Heart left ventricle (tissue), 16 donors: ENCODE measurements at regions of chr17 and their contacts with region 1.

Region 1: DNA sequence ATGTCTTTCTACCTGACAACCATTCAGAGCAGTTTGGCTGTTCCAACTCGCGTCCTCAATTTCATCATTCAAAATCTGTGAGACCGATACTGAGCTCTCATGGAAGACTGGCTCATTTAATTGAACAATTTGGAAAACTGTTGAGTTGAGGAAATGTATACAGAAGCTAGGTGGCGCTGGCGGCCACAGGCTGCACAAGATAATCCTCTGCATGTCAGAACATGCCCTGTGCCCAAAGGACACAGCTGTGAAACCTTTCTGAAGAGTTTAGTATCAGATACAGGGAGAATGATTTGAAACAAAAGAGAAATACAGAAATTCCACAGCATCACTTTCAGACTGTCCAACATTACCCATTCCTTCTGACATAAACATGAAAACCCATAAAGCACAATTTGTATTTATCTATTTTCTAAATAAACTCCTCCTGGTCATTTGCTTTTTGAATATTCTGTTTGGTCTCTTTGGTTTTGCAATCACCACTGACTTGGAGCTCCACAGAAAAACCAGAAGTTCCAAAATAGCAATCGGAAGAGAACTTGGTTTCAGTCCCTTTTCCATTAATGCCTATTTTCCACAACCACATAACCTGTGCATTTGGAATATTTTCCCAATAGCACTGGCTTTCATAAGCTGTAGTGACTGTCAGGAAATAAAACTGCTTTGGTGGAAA is 192.8 kb downstream of the MAP2K6 start:
- DNase-seq: peak; percentile 62 to 87 (median 76)
- ATAC-seq: peak; percentile 68 to 92 (median 86)
- H3K4me3 ChIP-seq: no peak overlapping the region
- H3K27ac ChIP-seq: peak overlapping the region; percentile 1 to 81 (median 62)
- H3K4me1 ChIP-seq: peaks cover 5 to 39% (median 33%) of the 10 kb centered on the region in 12 donors
- H3K27me3 ChIP-seq: no peaks in the 10 kb centered on the region
- CTCF ChIP-seq: peak; percentile 79 to 95 (median 89)
- POLR2A ChIP-seq: no peak

Region 2: DNA sequence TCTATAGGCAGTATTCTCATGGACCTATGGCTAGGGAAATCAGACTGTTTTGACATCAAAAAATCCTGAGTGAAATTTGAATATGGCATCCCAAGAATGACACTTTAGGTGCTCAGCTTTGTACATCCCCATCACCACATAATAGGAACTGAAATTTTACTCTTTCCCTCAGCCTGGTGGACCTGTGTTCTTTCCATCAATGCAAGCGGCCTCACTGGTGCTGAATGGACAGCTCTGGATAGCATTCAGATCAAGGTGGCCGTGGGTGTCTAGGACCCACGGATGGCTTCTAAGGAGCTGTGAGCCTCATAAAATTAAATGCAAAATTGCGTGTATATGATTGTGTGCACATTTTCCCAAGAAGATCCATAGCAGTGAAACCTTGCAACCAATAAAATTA is 40.2 kb before region 1 on chr17:
- intact Hi-C with region 1: loop called in 3 of 10 experiments (anchors 5 kb)
- DNase-seq: no peak
- ATAC-seq: no peak
- H3K4me3 ChIP-seq: no peak overlapping the region
- H3K27ac ChIP-seq: no peak overlapping the region
- H3K4me1 ChIP-seq: peaks cover 0 to 3% (median 0%) of the 10 kb centered on the region in 12 donors
- H3K27me3 ChIP-seq: no peaks in the 10 kb centered on the region
- CTCF ChIP-seq: no peak
- POLR2A ChIP-seq: no peak

Region 3: DNA sequence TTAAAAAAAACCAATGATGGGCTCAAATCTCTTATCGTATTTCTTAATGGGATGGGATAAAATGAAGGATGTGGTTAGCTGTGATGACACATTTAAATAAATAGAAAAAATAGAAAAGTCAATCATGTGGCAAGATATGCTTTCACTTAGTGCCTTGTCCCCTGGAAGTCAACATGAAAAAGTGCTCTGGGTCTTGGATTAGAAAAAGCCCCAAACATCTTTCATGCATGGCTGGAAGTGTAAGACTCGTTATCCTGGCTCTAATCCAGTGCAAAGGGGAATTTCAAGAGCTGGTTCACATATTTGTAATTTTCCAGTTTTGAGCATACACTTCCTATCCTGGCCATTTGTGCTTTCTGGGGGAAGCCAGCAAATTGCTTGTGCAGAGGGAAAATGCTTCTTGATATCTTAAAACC is 31.9 kb before region 1 on chr17:
- intact Hi-C with region 1: loop called in 1 of 10 experiments (anchors 5 kb)
- DNase-seq: no peak
- ATAC-seq: peak in 2 of 4 donors; percentile 55 to 63
- H3K4me3 ChIP-seq: no peak overlapping the region
- H3K27ac ChIP-seq: peak overlapping the region in 10 of 12 donors; percentile 3 to 58 (median 27)
- H3K4me1 ChIP-seq: peaks cover 3 to 31% (median 19%) of the 10 kb centered on the region in 12 donors
- H3K27me3 ChIP-seq: no peaks in the 10 kb centered on the region
- CTCF ChIP-seq: no peak
- POLR2A ChIP-seq: no peak

Region 4: GRCh38 chr17:70137451-70138230 is 530.3 kb after region 1 on chr17:
- intact Hi-C with region 1: loop called in 5 of 10 experiments (anchors 2 to 5 kb)
- DNase-seq: peak in 4 of 5 donors; percentile 32 to 53 (median 34)
- ATAC-seq: peak; percentile 95 to 99 (median 98)
- H3K4me3 ChIP-seq: peak overlapping the region in 11 of 12 donors; percentile 14 to 58 (median 42)
- H3K27ac ChIP-seq: peak overlapping the region; percentile 55 to 86 (median 82)
- H3K4me1 ChIP-seq: peaks cover 0 to 22% (median 15%) of the 10 kb centered on the region in 12 donors
- H3K27me3 ChIP-seq: no peaks in the 10 kb centered on the region
- CTCF ChIP-seq: no peak
- POLR2A ChIP-seq: no peak

Region 5: DNA sequence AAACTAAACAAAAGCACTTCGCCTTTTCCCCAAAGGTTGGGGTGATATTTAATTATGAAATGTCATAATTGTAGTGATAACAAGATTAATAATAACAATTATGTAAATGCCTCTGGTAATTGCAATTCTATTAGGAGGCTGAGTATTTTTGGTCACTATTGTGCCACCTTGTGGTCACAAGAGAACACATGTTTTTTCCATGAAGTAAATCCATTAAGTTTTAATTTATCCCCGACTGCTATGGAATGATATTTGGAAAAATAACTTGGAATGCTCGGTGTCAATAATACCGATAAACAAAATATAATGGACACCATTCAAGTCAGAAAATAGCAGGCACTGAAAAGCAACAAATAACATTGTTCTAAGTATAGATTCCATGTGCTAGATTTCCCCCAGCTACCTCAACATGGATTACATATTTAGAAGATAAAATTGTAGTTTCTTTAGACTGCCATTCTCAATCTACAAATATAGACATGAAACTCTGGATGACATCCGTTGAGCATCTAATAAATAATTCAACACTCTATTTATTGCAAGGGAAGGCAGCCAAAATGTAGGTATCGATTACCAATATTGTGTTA is 537.1 kb after region 1 on chr17:
- intact Hi-C with region 1: loop called (anchors 1 to 5 kb)
- DNase-seq: no peak
- ATAC-seq: no peak
- H3K4me3 ChIP-seq: no peak overlapping the region
- H3K27ac ChIP-seq: no peak overlapping the region
- H3K4me1 ChIP-seq: peaks cover 0 to 5% (median 0%) of the 10 kb centered on the region in 12 donors
- H3K27me3 ChIP-seq: no peaks in the 10 kb centered on the region
- CTCF ChIP-seq: peak; percentile 61 to 85 (median 74)
- POLR2A ChIP-seq: no peak

Region 6: GRCh38 chr17:70168977-70169708 is 561.8 kb after region 1 on chr17 and contains the start of gene KCNJ2:
- intact Hi-C with region 1: loop called in 2 of 10 experiments (anchors 5 kb)
- DNase-seq: peak; percentile 92 to 94 (median 94)
- ATAC-seq: peak; percentile 83 to 97 (median 91)
- H3K4me3 ChIP-seq: peak within 1 kb of the TSS; percentile 62 to 87 (median 77)
- H3K27ac ChIP-seq: peak within 1 kb of the TSS; percentile 87 to 98 (median 94)
- H3K4me1 ChIP-seq: peaks cover 0 to 38% (median 4%) of the 10 kb centered on the region in 12 donors
- H3K27me3 ChIP-seq: no peaks in the 10 kb centered on the region
- CTCF ChIP-seq: peak in 1 of 12 donors; percentile 3
- POLR2A ChIP-seq: peak; percentile 61 to 99
- total RNA-seq, gene KCNJ2: 28.8 to 60.7 (median 48.8) TPM